A673 (cell line): ENCODE measurements at regions of chr19 and their contacts with region 1.

Region 1: DNA sequence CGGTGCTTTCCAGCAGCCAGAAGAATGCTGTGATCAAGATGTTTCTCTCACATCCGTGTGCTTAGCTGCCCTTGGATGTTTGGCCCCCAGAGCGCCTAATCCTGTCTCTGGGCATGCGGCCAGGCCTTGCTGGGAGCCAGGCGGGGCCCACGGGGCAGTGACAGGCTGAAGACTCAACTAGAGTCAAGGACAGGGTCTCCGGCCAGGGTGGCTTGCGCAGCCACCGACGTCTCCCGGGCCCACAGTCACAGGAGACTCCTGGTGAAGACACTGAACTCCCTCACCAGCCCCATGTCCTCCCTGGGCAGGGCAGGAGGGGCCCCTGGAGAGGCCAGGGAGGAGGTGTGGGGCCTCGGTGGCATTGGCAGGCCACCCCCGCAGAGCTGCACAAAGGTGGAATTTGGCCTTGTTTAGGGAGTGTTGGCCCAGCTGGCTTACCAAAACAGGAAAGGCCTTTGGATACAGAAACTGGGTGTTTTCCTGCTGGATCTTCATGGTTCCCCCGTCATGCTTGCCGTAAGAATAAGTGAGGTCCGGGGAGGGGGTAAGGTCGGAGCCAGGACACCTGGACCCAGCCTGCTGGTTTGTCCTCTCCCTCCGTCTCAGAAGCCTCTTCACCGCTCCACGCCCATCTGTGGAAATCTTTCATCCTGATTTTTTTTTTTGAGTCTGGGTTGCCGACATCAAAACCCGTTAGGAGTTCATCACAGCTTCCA is 10.0 kb upstream of the NDUFS7 start:
- DNase-seq: peak; percentile 44
- H3K4me3 ChIP-seq: no peak overlapping the region
- H3K27ac ChIP-seq: peak overlapping the region; percentile 63
- H3K4me1 ChIP-seq: peaks cover 5% of the 10 kb centered on the region
- H3K27me3 ChIP-seq: no peaks in the 10 kb centered on the region
- CTCF ChIP-seq: no peak

Region 2: GRCh38 chr19:1261798-1262686 is 111.7 kb before region 1 on chr19:
- CTCF ChIA-PET with region 1: interaction called, 11 read pairs
- POLR2A ChIA-PET with region 1: no interaction called
- intact Hi-C with region 1: no loop called
- DNase-seq: no peak
- H3K4me3 ChIP-seq: peak overlapping the region; percentile 82
- H3K27ac ChIP-seq: peak overlapping the region; percentile 90
- H3K4me1 ChIP-seq: peaks cover 72% of the 10 kb centered on the region
- H3K27me3 ChIP-seq: no peaks in the 10 kb centered on the region
- CTCF ChIP-seq: no peak

Region 3: DNA sequence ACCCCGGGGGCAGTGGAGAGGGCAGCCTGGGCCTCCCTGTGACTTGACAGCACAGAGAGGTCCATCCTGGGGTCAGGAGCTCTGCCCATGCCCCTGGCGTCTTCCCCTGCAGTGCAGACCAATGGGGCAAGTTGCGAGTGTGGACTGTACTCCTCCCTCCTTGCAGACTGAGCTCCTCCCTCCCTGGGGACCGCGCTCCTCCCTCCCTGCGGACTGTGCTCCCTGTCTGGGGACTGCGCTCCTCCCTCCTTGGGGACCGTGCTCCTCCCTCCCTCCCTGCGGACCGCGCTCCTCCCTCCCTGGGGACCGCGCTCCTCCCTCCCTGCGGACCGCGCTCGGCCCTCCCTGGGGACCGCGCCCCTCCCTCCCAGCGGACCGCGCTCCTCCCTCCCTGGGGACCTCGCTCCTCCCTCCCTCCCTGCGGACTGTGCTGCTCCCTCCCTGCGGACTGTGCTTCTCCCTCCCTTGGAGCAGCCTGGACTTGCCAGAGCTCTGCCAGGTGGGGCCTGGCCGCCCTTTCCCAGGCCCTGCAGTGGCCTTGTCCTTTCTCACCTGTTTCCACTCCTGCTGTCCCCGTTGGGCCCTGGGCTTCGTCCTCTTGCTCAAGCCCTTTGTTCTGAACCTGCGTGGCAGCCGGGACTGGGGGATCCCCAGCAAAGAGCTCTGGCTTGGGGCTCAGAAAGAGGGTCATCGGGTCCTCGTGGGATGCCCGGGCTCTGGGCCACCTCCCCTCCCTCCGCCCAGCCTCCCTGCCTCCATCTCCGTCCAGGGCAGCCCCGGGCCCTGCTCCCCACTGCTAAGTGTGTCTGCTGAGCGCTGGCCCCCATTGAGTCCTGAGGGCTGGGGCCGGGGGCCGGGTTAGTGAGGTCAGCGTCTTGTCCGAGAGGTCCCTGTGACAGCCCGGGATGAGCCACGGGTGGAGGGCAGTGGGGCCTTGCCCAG is 20.8 kb after region 1 on chr19:
- CTCF ChIA-PET with region 1: no interaction called
- POLR2A ChIA-PET with region 1: no interaction called
- intact Hi-C with region 1: no loop called
- DNase-seq: peak; percentile 42
- H3K4me3 ChIP-seq: no peak overlapping the region
- H3K27ac ChIP-seq: no peak overlapping the region
- H3K4me1 ChIP-seq: peaks cover 24% of the 10 kb centered on the region
- H3K27me3 ChIP-seq: no peaks in the 10 kb centered on the region
- CTCF ChIP-seq: no peak

Region 4: GRCh38 chr19:1540365-1540925 is 166.8 kb after region 1 on chr19:
- CTCF ChIA-PET with region 1: no interaction called
- POLR2A ChIA-PET with region 1: no interaction called
- intact Hi-C with region 1: no loop called
- DNase-seq: no peak
- H3K4me3 ChIP-seq: no peak overlapping the region
- H3K27ac ChIP-seq: no peak overlapping the region
- H3K4me1 ChIP-seq: peaks cover 8% of the 10 kb centered on the region
- H3K27me3 ChIP-seq: no peaks in the 10 kb centered on the region
- CTCF ChIP-seq: no peak